ENCODE measurements at regions of chr7 and their contacts with region 1.

Region 1: GRCh38 chr7:73578342-73579127 is at the start of gene TBL2:
- DNase-seq: peak; percentile 94
- ATAC-seq: peak; percentile 91
- H3K4me3 ChIP-seq: peak within 1 kb of the TSS; percentile 87 to 96 (median 94)
- H3K27ac ChIP-seq: peak within 1 kb of the TSS; percentile 82
- H3K4me1 ChIP-seq: peaks cover 44% of the 10 kb centered on the region
- H3K27me3 ChIP-seq: peaks cover 0 to 4% of the 10 kb centered on the region in 2 experiments; a peak in 1 of 5 replicates
- CTCF ChIP-seq: peak; percentile 43
- EP300 ChIP-seq: 0 out of 4 replicates have a peak, but pooled peaks of 1 of the 2 experiments have one; percentile 4
- POLR2A ChIP-seq: peak; percentile 95 to 96
- RAD21 ChIP-seq: peak; percentile 61
- total RNA-seq, gene TBL2: 17.7 and 47.2 TPM in 2 replicates

Region 2: DNA sequence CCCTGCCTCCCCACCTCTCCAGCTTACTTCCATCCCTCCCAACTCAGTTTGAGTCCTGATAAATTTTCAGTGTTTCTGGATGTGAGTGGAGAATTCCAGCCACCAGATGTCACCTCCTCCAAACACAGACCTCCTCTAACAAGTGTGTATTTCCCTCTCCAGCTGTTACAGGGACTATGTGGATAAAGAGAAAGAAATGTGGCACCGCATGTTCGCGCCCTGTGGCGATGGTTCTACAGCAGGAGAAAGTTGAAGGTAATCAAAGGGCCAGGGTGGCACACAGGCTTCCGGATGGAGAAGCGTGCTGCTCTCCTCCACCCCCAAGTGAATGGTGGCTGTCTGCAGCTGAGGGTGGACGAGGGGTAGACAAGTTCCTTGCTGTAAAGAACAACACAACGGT is 235.9 kb before region 1 on chr7:
- CTCF ChIA-PET with region 1: no interaction called
- POLR2A ChIA-PET with region 1: no interaction called
- in situ Hi-C with region 1: no loop called
- intact Hi-C with region 1: no loop called
- DNase-seq: peak; percentile 73
- ATAC-seq: peak; percentile 79
- H3K4me3 ChIP-seq: peak overlapping the region; percentile 11 to 67 (median 43); a peak in 4 of 6 replicates
- H3K27ac ChIP-seq: no peak overlapping the region
- H3K4me1 ChIP-seq: peaks cover 62% of the 10 kb centered on the region
- H3K27me3 ChIP-seq: peaks cover 0 to 5% of the 10 kb centered on the region in 2 experiments; a peak in 1 of 5 replicates
- CTCF ChIP-seq: peak; percentile 90
- EP300 ChIP-seq: no peak
- POLR2A ChIP-seq: no peak
- RAD21 ChIP-seq: peak; percentile 69

Region 3: GRCh38 chr7:73397521-73398281 is 180.8 kb before region 1 on chr7:
- CTCF ChIA-PET with region 1: no interaction called
- POLR2A ChIA-PET with region 1: no interaction called
- in situ Hi-C with region 1: no loop called
- intact Hi-C with region 1: no loop called
- DNase-seq: no peak
- ATAC-seq: no peak
- H3K4me3 ChIP-seq: no peak overlapping the region
- H3K27ac ChIP-seq: no peak overlapping the region
- H3K4me1 ChIP-seq: peaks cover 18% of the 10 kb centered on the region
- H3K27me3 ChIP-seq: peaks cover 0 to 9% of the 10 kb centered on the region in 2 experiments; a peak in 3 of 5 replicates
- CTCF ChIP-seq: no peak
- EP300 ChIP-seq: no peak
- POLR2A ChIP-seq: no peak
- RAD21 ChIP-seq: no peak

Region 4: GRCh38 chr7:73522105-73522872 is 56.2 kb before region 1 on chr7 and contains the start of gene BAZ1B:
- CTCF ChIA-PET with region 1: no interaction called
- POLR2A ChIA-PET with region 1: interaction called, 17 read pairs
- in situ Hi-C with region 1: no loop called
- intact Hi-C with region 1: no loop called
- DNase-seq: peak; percentile 95
- ATAC-seq: peak; percentile 96
- H3K4me3 ChIP-seq: peak within 1 kb of the TSS; percentile 80 to 89 (median 82)
- H3K27ac ChIP-seq: peak within 1 kb of the TSS; percentile 91
- H3K4me1 ChIP-seq: peaks cover 31% of the 10 kb centered on the region
- H3K27me3 ChIP-seq: no peaks in the 10 kb centered on the region; a peak in 1 of 5 replicates
- CTCF ChIP-seq: 0 out of 2 replicates have a peak, but pooled peaks have one; percentile 31
- EP300 ChIP-seq: peak in 1 of 2 experiments; percentile 42; a peak in 1 of 4 replicates
- POLR2A ChIP-seq: peak; percentile 68 to 76
- RAD21 ChIP-seq: peak; percentile 33; the same call in 1 of the 2 replicates
- total RNA-seq, gene BAZ1B: 69.4 and 93.4 TPM in 2 replicates

Region 5: DNA sequence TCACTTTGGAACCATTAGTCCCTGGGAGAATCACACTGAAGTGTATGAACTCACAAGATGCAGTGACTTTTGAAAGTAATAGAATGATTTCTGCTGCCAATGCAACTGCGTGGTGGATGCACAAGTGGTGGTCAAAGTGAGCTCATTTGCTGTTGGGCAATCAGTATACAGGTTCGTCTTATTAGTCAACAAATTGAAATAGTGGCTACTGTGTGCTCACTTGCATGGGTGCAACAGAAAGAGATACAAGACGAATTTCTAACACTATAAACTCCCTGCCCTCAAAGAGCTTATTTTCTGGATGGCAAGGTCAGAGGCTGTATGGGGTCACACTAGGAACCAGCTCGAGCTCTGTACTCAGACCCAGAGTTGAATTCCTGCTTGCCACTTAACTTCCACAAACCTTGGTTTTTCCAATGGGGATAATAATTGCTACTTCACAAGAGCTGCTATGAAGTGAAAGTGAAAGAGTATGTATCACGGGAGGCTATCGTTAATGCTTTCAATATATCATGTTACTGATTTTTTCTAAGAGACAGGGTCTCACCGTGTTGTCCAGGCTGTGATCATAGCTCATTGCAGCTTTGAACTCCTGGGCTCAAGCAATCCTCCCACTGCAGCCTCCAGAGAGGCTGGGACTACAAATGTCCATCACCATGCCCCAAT is 12.7 kb before region 1 on chr7:
- CTCF ChIA-PET with region 1: no interaction called
- POLR2A ChIA-PET with region 1: interaction called, 16 read pairs
- in situ Hi-C with region 1: no loop called
- intact Hi-C with region 1: no loop called
- DNase-seq: no peak
- ATAC-seq: no peak
- H3K4me3 ChIP-seq: no peak overlapping the region
- H3K27ac ChIP-seq: no peak overlapping the region
- H3K4me1 ChIP-seq: peaks cover 34% of the 10 kb centered on the region
- H3K27me3 ChIP-seq: no peaks in the 10 kb centered on the region
- CTCF ChIP-seq: no peak
- EP300 ChIP-seq: no peak
- POLR2A ChIP-seq: no peak
- RAD21 ChIP-seq: no peak